PC-9 (cell line): ENCODE measurements at regions of chr17 and their contacts with region 1.

Region 1: DNA sequence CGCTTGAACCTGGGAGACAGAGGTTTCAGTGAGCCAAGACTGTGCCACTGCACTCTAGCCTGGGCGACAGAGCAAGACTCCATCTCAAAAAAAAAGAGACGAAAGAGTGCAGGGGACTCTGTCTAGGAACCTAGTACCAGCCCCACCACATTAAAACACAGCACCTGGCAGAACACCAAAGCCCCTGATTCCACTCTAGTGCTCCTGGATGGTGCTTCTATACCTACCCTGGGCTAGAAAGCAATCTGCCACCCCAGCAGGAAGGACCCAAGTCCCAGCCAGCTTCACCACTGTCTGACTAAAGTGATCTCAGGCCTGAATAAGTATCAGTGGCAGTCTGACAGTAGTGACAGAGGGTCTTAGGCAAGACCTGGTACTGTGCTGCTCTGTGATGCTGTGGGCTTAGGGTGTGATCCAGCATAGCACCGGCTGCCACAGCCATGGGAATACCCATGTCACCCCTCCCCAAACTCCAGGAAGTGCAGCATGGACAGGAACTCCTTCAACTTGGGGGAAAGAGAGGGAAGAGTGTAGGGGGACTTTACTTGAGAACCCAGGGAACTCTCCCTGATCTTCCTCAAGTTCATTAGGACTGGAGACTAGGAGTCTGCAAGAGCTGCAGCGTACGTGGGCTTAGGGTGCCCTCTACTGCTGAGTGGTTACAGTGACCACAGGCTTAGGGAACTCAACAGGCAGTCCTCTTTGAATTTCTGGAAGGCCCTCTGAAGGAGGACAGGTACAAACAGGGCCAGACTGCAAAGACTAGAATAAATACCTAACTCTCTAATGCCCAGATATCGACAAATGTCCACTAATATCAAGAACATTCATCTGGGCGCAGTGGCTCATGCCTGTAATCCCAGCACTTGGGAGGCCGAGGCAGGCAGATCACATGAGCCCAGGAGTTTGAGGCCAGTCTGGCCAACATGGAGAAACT is 30.0 kb upstream of the RNF43 start:
- DNase-seq: peak; percentile 75 to 79
- H3K4me3 ChIP-seq: no peak overlapping the region
- H3K27ac ChIP-seq: no peak overlapping the region
- H3K4me1 ChIP-seq: no peaks in the 10 kb centered on the region
- H3K27me3 ChIP-seq: peaks cover 23% of the 10 kb centered on the region
- CTCF ChIP-seq: peak; percentile 93

Region 2: DNA sequence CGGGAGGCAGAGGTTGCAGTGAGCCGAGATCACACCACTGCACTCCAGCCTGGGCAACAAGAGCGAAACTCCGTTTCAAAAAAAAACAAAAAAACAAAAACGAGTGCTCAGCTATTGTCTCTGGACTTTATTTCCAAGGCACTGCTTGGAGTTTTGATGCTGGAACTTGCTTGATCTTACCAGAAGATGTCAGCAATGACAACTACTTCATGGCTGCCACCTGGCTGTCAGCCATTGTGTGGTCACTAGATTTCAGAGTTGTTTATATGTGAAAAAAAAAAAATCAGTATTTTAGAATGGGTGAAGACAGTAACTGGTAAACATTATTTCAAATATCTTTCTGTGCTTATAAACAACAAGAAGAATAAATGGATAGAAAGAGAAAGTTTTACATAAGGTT is 325.4 kb before region 1 on chr17:
- CTCF ChIA-PET with region 1: no interaction called
- POLR2A ChIA-PET with region 1: no interaction called
- intact Hi-C with region 1: loop called (anchors 1 kb)
- DNase-seq: peak; percentile 17 to 49
- H3K4me3 ChIP-seq: no peak overlapping the region
- H3K27ac ChIP-seq: no peak overlapping the region
- H3K4me1 ChIP-seq: no peaks in the 10 kb centered on the region
- H3K27me3 ChIP-seq: peaks cover 48% of the 10 kb centered on the region
- CTCF ChIP-seq: peak; percentile 66

Region 3: GRCh38 chr17:58277107-58277801 is 170.1 kb before region 1 on chr17:
- CTCF ChIA-PET with region 1: no interaction called
- POLR2A ChIA-PET with region 1: no interaction called
- intact Hi-C with region 1: loop called (anchors 1 kb)
- DNase-seq: no peak
- H3K4me3 ChIP-seq: no peak overlapping the region
- H3K27ac ChIP-seq: no peak overlapping the region
- H3K4me1 ChIP-seq: no peaks in the 10 kb centered on the region
- H3K27me3 ChIP-seq: peaks cover 88% of the 10 kb centered on the region
- CTCF ChIP-seq: peak; percentile 68

Region 4: DNA sequence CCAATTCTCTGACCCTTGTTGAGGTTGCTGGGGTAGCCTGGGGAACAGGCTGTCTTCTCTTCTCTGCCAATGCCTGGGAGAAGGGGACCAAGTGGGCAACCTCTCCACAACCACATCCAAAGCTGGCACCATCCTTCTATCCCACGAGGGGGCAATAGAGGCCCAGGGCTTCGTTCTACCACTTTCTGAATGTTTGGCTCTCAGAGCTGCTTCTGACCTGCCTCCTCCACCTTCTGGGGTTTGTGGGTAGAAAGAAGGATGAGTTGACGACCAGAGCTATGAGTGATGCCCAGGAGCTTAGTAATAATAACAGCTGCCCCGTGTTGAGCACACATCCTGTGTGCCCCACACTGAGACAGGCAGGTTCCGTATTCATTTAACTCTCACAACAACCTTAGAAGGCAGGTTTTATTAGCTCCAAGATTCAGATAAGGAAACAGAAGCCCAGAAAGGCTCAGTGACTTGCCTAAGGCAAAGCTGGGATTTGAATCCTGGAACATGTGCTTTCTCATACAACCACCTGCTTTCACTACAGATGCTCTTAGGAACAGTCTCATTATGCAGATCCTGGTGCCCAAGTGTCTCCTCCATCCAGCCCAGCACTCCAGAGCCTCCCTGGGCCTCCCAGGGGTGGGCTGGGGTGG is 129.8 kb before region 1 on chr17:
- CTCF ChIA-PET with region 1: interaction called, 5 read pairs
- POLR2A ChIA-PET with region 1: no interaction called
- intact Hi-C with region 1: loop called (anchors 1 kb)
- DNase-seq: peak; percentile 58 to 71
- H3K4me3 ChIP-seq: no peak overlapping the region
- H3K27ac ChIP-seq: no peak overlapping the region
- H3K4me1 ChIP-seq: no peaks in the 10 kb centered on the region
- H3K27me3 ChIP-seq: peaks cover 60% of the 10 kb centered on the region; the same call in 1 of the 2 replicates
- CTCF ChIP-seq: peak; percentile 88